Activated CD4-positive, alpha-beta T cell treated with anti-CD3 and anti-CD28 coated beads, Interleukin-2, amount 10 ng/mL, durations not matched to agents 7 days and 5 days (primary cell): ENCODE measurements at regions of chr19 and their contacts with region 1.

Region 1: DNA sequence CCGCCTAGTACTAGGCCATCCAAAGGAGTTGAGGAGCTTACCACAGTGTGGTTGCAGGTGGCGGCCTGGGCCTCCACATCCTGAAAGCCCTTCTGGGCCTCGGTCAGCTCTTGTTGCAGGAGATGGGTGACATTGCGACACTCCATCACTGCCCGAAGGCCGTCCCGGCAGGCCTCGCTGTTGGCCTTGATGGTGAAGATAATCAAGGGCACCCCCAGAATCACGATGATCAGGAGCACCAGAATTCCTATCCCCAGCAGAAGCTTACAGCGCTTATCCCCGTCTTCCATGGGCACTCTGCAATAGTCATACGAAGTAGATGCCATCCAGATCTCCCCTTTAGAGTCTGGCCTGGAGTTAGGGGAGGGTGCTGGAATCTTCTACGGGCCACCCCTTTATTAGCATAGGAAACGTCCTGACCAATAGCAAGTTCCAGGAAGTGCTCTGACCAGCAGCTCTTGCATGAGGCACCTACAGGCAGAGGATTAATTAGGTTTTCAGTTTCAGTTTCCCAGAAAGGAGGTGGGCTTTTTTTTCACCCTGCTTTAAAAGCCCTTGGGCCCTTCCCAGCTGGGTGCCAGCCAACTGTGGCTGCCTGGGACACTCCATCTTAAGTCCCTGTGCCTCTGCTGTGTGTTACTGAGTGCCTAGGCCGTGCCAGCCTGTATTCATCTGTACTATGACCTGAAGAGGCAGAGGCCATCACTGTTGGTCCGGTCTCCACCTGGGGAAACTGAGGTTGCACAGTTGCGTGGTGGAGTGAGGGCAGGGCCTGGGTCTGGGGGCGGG is at the start of gene BST2:
- DNase-seq: peak; percentile 72
- H3K4me3 Mint-ChIP-seq: peak within 1 kb of the TSS; percentile 96
- H3K27ac Mint-ChIP-seq: peak within 1 kb of the TSS; percentile 95
- H3K4me1 Mint-ChIP-seq: peaks cover 42% of the 10 kb centered on the region
- H3K27me3 Mint-ChIP-seq: no peaks in the 10 kb centered on the region
- total RNA-seq, gene BST2: 192 to 198 TPM

Region 2: GRCh38 chr19:17419621-17420466 is 14.4 kb after region 1 on chr19 and contains the start of gene MVB12A:
- CTCF ChIA-PET with region 1: interaction called, 7 read pairs
- POLR2A ChIA-PET with region 1: interaction called, 14 read pairs
- DNase-seq: peak; percentile 96
- H3K4me3 Mint-ChIP-seq: peak within 1 kb of the TSS; percentile 91
- H3K27ac Mint-ChIP-seq: peak within 1 kb of the TSS; percentile 93
- H3K4me1 Mint-ChIP-seq: peaks cover 24% of the 10 kb centered on the region
- H3K27me3 Mint-ChIP-seq: no peaks in the 10 kb centered on the region
- total RNA-seq, gene MVB12A: 33.5 to 44.5 TPM